ENCODE measurements at regions of chr1 and their contacts with region 1.

Region 1: GRCh38 chr1:1115786-1116700 is at the start of gene C1orf159:
- DNase-seq: peak; percentile 99
- H3K4me3 Mint-ChIP-seq: peak within 1 kb of the TSS; percentile 82
- H3K27ac Mint-ChIP-seq: peak within 1 kb of the TSS; percentile 65
- H3K4me1 Mint-ChIP-seq: peaks cover 17% of the 10 kb centered on the region
- H3K27me3 Mint-ChIP-seq: no peaks in the 10 kb centered on the region
- total RNA-seq, gene C1orf159: 14.9 to 18.6 TPM

Region 2: DNA sequence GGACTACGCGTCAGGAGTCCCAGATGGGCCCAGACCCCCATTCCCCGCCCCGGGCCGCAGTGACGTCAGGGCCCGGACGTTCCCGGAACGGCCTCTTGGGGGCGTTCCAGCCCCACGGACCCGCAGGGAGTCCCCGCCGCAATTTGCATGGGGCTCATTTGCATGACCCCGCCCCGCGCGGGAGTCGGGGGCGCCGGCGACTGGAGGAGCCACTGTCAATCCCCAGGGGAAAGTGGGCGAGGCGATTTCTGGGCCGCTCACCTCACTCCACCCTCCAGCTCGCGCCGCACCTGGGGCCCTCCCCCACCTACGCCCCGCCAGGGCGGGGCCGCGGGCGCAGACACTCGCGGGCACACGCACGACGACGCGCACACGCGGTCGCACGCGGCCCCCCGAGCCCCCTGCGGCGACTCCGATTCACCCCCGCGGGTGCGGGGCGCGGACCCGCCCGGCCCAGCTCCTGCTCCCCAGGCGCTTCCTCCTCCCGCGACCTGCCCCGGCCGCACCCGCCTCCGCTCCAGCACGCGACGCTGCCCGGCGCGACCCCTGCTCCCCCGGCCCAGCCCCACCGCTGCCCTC is 82.9 kb before region 1 on chr1:
- CTCF ChIA-PET with region 1: no interaction called
- intact Hi-C with region 1: loop called (anchors 1 kb)
- DNase-seq: peak; percentile 97
- H3K4me3 Mint-ChIP-seq: peak overlapping the region; percentile 45
- H3K27ac Mint-ChIP-seq: no peak overlapping the region
- H3K4me1 Mint-ChIP-seq: peaks cover 9% of the 10 kb centered on the region
- H3K27me3 Mint-ChIP-seq: peaks cover 9% of the 10 kb centered on the region

Region 3: DNA sequence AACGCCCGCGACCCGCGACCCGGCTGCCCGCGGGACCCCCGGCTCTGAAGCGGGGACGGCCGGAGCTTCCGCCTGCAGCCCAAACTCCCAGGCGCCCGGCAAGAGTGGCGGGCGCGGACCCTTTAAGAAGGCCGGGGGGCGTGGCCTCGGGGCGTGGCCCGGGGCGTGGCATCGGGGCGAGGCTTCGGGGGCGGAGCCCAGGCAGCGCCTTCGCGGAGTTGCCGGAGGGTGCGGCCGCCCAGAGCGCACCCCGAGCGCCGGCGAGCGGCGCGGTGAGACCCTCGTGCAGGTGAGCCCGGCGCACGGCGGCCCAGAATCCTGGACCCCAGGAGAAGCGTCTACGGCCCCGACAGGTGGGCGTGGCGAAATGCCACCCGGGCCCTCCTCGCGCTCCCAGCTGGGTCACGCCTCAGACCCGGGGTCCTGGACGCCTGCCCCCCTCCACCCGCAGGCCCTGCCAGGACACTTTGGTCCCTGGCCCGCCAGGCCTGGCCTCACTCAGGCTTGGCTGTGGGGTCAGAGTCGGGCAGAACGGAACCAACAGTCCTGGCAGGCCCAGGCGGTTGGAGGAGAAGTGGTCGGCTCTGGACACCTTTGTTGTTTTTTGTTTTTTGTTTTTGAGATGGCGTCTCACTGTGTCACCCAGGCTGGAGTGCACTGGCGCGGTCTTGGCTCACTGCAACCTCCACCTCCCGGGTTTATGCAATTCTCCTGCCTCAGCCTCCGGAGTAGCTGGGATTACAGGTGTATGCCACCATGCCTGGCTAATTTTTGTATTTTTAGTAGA is 56.4 kb before region 1 on chr1:
- CTCF ChIA-PET with region 1: no interaction called
- intact Hi-C with region 1: loop called (anchors 1 kb)
- DNase-seq: peak; percentile 94
- H3K4me3 Mint-ChIP-seq: peak overlapping the region; percentile 71
- H3K27ac Mint-ChIP-seq: no peak overlapping the region
- H3K4me1 Mint-ChIP-seq: peaks cover 37% of the 10 kb centered on the region
- H3K27me3 Mint-ChIP-seq: peaks cover 26% of the 10 kb centered on the region

Region 4: GRCh38 chr1:1208713-1209433 is 92.8 kb after region 1 on chr1:
- CTCF ChIA-PET with region 1: interaction called, 3 read pairs
- intact Hi-C with region 1: loop called (anchors 2 kb)
- DNase-seq: peak; percentile 66
- H3K4me3 Mint-ChIP-seq: peak overlapping the region; percentile 80
- H3K27ac Mint-ChIP-seq: peak overlapping the region; percentile 89
- H3K4me1 Mint-ChIP-seq: peaks cover 34% of the 10 kb centered on the region
- H3K27me3 Mint-ChIP-seq: no peaks in the 10 kb centered on the region

Region 5: GRCh38 chr1:1250786-1251284 is 134.8 kb after region 1 on chr1:
- CTCF ChIA-PET with region 1: interaction called, 43 read pairs
- intact Hi-C with region 1: loop called (anchors 1 kb)
- DNase-seq: peak; percentile 91
- H3K4me3 Mint-ChIP-seq: peak overlapping the region; percentile 10
- H3K27ac Mint-ChIP-seq: peak overlapping the region; percentile 85
- H3K4me1 Mint-ChIP-seq: peaks cover 22% of the 10 kb centered on the region
- H3K27me3 Mint-ChIP-seq: peaks cover 2% of the 10 kb centered on the region